Esophagus squamous epithelium (tissue), 5 donors: ENCODE measurements at regions of chr19 and their contacts with region 1.

Region 1: GRCh38 chr19:47305309-47305751 is 4.3 kb upstream of the C5AR1 start:
- DNase-seq: no peak
- H3K4me3 ChIP-seq: no peak overlapping the region
- H3K27ac ChIP-seq: no peak overlapping the region
- H3K4me1 ChIP-seq: peaks cover 2 to 18% (median 5%) of the 10 kb centered on the region in 3 donors
- H3K27me3 ChIP-seq: peaks cover 0 to under 1% (median 0%) of the 10 kb centered on the region in 4 donors
- CTCF ChIP-seq: peak; percentile 76 to 91 (median 86)
- POLR2A ChIP-seq: no peak

Region 2: GRCh38 chr19:47243776-47244547 is 61.4 kb before region 1 on chr19:
- intact Hi-C with region 1: no loop called
- DNase-seq: no peak
- H3K4me3 ChIP-seq: peak overlapping the region in 3 of 4 donors; percentile 39 to 53 (median 39)
- H3K27ac ChIP-seq: peak overlapping the region; percentile 63 to 77 (median 65)
- H3K4me1 ChIP-seq: peaks cover 33 to 51% (median 35%) of the 10 kb centered on the region in 3 donors
- H3K27me3 ChIP-seq: peaks cover 0 to 45% (median 0%) of the 10 kb centered on the region in 4 donors
- CTCF ChIP-seq: peak; percentile 99 to 100 (median 99)
- POLR2A ChIP-seq: peak in 1 of 4 donors; percentile 37

Region 3: DNA sequence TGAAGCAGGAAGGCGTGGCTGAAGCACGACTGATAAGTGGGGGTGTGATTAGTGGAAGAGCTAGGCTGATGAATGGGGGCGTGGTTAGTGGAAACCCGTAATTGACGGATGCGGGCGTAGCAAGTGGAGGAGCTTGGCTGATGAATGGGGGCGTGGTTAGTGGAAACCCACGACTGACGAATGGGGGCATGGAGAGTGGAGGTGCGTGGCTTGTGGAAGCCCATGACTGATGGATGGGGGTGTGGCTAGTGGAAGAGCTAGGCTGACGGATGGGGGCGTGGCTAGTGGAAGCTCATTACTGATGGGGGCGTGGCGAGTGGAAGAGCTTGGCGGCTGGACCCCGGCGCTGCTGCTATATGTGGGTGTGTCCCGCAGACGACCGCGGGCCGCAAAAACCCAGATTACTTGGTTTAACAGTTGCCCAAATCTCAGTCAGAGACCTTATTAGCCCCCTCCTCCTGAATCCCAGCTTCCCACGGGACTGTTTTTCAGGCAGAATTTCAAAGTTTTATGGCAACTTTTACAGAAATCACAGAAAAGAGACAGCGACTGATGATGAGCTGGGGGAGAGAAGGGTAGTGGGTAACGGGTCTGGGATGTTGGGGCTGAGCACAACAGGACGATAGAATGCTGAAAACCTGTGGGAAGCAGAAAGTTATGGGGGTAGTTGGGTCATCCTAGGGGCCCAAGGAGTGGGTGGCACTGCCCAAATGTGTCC is 123.0 kb after region 1 on chr19:
- intact Hi-C with region 1: loop called (anchors 10 kb)
- DNase-seq: no peak
- H3K4me3 ChIP-seq: peak overlapping the region in 2 of 4 donors; percentile 4 to 34
- H3K27ac ChIP-seq: peak overlapping the region in 3 of 4 donors; percentile 56 to 70 (median 67)
- H3K4me1 ChIP-seq: peaks cover 7 to 37% (median 25%) of the 10 kb centered on the region in 3 donors
- H3K27me3 ChIP-seq: peaks cover 0 to 89% (median 7%) of the 10 kb centered on the region in 4 donors
- CTCF ChIP-seq: no peak
- POLR2A ChIP-seq: no peak